ENCODE measurements at regions of chr13 and their contacts with region 1.

Region 1: GRCh38 chr13:30978981-30979956 is 46.8 kb downstream of the TEX26 start:
- DNase-seq: peak; percentile 49

Region 2: GRCh38 chr13:30918662-30919405 is 60.4 kb before region 1 on chr13:
- CTCF ChIA-PET with region 1: no interaction called
- POLR2A ChIA-PET with region 1: no interaction called
- DNase-seq: no peak

Region 3: DNA sequence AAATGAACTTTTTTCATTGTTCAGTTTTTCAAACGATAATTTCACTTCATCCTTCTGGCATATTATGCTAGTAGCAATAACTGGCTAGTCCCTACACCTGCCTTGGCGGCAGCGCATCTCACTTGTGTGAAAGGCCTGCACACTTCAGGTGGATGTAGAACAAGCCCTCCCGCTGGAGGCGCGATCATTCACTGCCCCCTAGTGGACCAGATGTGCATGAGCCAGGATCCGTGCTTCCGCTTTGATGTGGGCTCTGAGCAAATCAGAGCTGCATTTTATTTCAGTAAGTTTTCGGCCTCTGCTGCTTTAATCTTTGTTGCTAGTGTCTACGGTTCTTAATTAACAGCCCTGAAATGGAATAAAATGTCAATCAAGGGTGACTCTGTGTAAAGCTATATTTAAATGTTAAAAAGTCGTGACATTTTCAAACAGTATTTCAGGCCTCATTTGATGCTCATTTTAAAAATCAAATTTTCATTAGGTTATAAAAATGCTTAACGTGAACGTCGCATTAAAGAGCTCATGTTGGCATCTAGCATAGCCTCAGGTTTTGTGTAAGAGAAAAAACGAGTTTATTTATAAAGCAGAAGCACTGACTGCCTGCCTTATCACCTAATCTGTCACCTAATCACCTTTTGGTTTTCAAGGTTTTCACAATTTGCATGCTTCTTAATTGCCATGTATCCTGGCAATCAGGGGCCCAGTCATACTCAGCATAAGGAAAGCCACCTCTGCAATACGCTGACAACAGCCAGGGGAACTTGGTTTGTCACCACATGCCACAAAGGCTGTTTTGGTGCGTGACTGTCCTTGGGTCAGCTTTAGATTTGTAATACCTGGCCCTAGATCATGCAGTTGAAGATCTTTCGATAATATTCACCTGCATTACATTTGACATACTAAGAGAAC is 65.4 kb after region 1 on chr13:
- CTCF ChIA-PET with region 1: interaction called, 10 read pairs
- POLR2A ChIA-PET with region 1: no interaction called
- DNase-seq: peak; percentile 80

Measured in HEK293T (cell line).